ENCODE measurements at regions of chr2 and their contacts with region 1.

Region 1: GRCh38 chr2:23926750-23927571 is at the start of gene ATAD2B:
- DNase-seq: peak; percentile 93

Region 2: DNA sequence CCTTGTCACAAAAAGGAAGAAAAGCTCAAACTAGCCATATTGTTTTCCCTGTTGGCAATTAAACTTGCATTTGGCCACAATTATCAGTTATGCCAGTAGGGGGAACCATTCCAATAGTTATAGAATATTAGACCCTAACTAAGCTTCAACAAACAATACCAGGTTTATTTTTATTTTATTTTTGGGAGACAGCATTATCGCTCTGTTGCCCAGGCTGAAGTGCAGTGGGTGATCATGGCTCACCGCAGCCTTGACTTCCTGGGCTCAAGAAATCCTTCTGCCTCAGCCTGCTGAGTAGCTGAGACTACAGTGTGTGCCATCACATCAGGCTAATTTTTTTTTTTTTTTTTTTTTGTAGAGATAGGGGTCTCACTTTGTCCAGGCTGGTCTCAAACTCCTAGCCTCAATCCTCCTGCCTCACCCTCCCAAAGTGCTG is 102.2 kb before region 1 on chr2:
- CTCF ChIA-PET with region 1: interaction called, 17 read pairs
- POLR2A ChIA-PET with region 1: interaction called, 9 read pairs
- DNase-seq: peak; percentile 32

Region 3: DNA sequence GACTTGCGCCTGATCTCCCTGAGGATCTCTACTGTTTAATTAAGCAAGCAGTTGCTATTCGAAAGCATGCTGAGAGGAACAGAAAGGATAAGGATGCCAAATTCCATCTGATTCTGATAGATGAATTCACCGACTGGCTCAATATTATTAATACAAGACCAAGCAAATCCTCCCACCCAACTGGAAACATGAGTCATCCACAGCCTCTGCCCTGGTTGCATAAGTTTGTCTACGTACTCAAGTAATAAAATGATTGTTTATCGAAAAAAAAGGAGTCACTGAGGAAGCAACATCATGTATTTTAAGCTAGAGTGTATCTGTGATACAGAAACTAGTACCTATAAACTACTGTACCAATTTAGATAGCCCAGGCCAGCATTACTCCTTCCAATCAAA is 26.0 kb before region 1 on chr2:
- CTCF ChIA-PET with region 1: interaction called, 3 read pairs
- POLR2A ChIA-PET with region 1: interaction called, 10 read pairs
- DNase-seq: no peak

Region 4: DNA sequence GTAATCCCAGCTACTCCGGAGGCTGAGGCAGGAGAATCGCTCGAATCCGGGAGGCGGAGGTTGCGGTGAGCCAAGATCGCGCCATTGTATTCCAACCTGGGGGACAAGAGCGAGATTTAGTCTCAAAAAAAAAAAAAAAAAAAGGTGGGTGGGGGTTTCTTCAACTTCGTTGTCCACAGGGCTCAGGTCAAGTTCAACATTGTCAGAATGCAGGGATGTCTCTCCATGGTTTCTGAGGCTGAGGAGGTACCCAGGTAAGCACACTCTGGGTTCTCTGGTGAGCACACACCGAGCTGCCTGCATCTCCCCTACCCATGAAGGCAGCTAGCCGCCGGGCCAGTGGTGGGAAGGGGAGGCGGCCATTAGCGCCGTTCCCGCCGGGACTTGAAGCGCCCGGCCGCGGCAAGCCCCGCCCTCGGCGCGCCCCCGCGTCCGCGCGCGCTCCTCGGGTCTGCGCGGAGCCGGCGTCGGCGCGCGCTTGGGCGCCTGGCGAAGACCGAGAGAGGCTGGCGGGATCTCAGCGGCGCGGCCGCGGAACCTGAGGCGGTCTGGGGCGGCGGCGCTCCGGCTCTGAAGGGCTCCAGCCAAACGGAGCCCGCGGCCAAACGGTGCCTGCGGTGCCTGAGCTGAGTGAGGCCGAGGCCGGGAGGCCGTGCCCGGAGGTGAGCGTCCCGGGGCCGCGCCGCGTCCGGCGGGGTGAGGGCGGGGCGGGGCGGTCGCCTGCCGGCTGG is 13.2 kb after region 1 on chr2 and contains the start of gene UBXN2A:
- CTCF ChIA-PET with region 1: interaction called, 27 read pairs
- POLR2A ChIA-PET with region 1: interaction called, 80 read pairs
- DNase-seq: peak; percentile 87

Region 5: DNA sequence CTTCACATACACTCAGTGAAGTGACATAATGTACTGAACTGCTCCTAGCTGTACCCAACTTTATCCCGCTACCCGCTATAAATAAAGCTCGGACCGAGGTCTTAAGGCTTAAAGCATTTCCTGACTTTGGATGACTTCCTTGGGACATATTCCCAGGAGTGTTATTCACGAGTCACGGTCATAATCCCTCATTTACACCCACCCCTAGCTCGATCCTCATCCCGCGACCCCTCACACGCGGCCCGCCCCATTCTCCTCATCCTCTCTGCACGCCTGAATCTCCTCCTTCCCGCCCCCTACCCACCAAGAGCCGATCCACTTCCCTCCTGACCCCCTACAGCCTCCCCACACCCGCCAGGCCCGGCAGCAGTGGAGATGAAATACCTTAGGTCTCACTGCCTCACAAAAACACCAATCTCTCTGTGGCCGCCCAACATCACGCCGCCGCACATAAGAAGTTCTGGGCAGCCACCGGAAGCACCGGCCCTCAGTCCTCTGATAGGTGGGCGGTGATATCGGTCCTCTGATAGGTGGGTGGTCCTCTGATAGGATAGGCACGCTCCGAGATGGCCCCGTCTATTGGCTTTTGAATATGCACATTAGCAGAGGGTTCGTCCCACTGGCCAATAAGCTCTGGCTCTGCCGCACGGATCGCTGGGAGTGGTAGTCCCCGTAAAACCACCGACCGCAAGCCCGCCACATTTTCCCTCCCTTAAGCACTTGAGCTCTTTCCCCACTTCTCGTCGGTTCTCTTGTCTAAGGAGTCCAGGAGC is 120.2 kb after region 1 on chr2 and contains the start of gene WDCP:
- CTCF ChIA-PET with region 1: interaction called, 6 read pairs
- POLR2A ChIA-PET with region 1: interaction called, 44 read pairs
- DNase-seq: peak; percentile 91

Region 6: GRCh38 chr2:24075915-24076848 is 149.2 kb after region 1 on chr2 and contains the start of gene SF3B6:
- CTCF ChIA-PET with region 1: interaction called, 3 read pairs
- POLR2A ChIA-PET with region 1: interaction called, 20 read pairs
- DNase-seq: peak; percentile 93

Region 7: GRCh38 chr2:24084386-24085361 is 157.7 kb after region 1 on chr2 and contains the start of gene TP53I3:
- CTCF ChIA-PET with region 1: interaction called, 11 read pairs
- POLR2A ChIA-PET with region 1: interaction called, 25 read pairs
- DNase-seq: peak; percentile 92